ENCODE measurements at regions of chr3 and their contacts with region 1.

Region 1: GRCh38 chr3:195210266-195210973 is 60.5 kb downstream of the XXYLT1 start:
- DNase-seq: no peak
- H3K4me3 ChIP-seq: no peak overlapping the region
- H3K27ac ChIP-seq: no peak overlapping the region
- H3K4me1 ChIP-seq: peaks cover 2 to 35% (median 4%) of the 10 kb centered on the region in 4 experiments
- H3K27me3 ChIP-seq: no peaks in the 10 kb centered on the region

Region 2: GRCh38 chr3:195226900-195227447 is 16.6 kb after region 1 on chr3:
- CTCF ChIA-PET with region 1: interaction called, 10 read pairs
- POLR2A ChIA-PET with region 1: no interaction called
- DNase-seq: peak in 2 of 3 donors; percentile 51 to 53
- H3K4me3 ChIP-seq: no peak overlapping the region
- H3K27ac ChIP-seq: no peak overlapping the region
- H3K4me1 ChIP-seq: peaks cover 3 to 38% (median 30%) of the 10 kb centered on the region in 4 experiments
- H3K27me3 ChIP-seq: no peaks in the 10 kb centered on the region